Sigmoid colon (tissue), 7 donors: ENCODE measurements at regions of chr10 and their contacts with region 1.

Region 1: GRCh38 chr10:76547352-76547972 is 1090.1 kb downstream of the KCNMA1 start:
- DNase-seq: peak; percentile 89
- H3K4me3 ChIP-seq: no peak overlapping the region
- H3K27ac ChIP-seq: no peak overlapping the region
- H3K4me1 ChIP-seq: peaks cover 0 to 78% (median 55%) of the 10 kb centered on the region in 4 donors
- H3K27me3 ChIP-seq: no peaks in the 10 kb centered on the region
- CTCF ChIP-seq: peak; percentile 67 to 84 (median 76)
- EP300 ChIP-seq: no peak
- POLR2A ChIP-seq: no peak

Region 2: GRCh38 chr10:75922435-75922834 is 625.0 kb before region 1 on chr10:
- intact Hi-C with region 1: loop called (anchors 10 kb)
- DNase-seq: no peak
- H3K4me3 ChIP-seq: no peak overlapping the region
- H3K27ac ChIP-seq: no peak overlapping the region
- H3K4me1 ChIP-seq: no peaks in the 10 kb centered on the region
- H3K27me3 ChIP-seq: no peaks in the 10 kb centered on the region
- CTCF ChIP-seq: no peak
- EP300 ChIP-seq: no peak
- POLR2A ChIP-seq: no peak

Region 3: GRCh38 chr10:76303682-76304316 is 243.7 kb before region 1 on chr10:
- intact Hi-C with region 1: no loop called
- DNase-seq: peak; percentile 80
- H3K4me3 ChIP-seq: no peak overlapping the region
- H3K27ac ChIP-seq: peak overlapping the region in 2 of 4 donors; percentile 39 to 44
- H3K4me1 ChIP-seq: peaks cover 0 to 28% (median 17%) of the 10 kb centered on the region in 4 donors
- H3K27me3 ChIP-seq: no peaks in the 10 kb centered on the region
- CTCF ChIP-seq: peak in 3 of 4 experiments; percentile 27 to 41 (median 28)
- EP300 ChIP-seq: no peak
- POLR2A ChIP-seq: no peak

Region 4: GRCh38 chr10:76667408-76668370 is 120.2 kb after region 1 on chr10:
- intact Hi-C with region 1: no loop called
- DNase-seq: no peak
- H3K4me3 ChIP-seq: no peak overlapping the region
- H3K27ac ChIP-seq: peak overlapping the region in 1 of 4 donors; percentile 34
- H3K4me1 ChIP-seq: peaks cover 0 to 18% (median 7%) of the 10 kb centered on the region in 4 donors
- H3K27me3 ChIP-seq: no peaks in the 10 kb centered on the region
- CTCF ChIP-seq: no peak
- EP300 ChIP-seq: no peak
- POLR2A ChIP-seq: no peak